HepG2 (cell line): ENCODE measurements at regions of chr2 and their contacts with region 1.

Region 1: DNA sequence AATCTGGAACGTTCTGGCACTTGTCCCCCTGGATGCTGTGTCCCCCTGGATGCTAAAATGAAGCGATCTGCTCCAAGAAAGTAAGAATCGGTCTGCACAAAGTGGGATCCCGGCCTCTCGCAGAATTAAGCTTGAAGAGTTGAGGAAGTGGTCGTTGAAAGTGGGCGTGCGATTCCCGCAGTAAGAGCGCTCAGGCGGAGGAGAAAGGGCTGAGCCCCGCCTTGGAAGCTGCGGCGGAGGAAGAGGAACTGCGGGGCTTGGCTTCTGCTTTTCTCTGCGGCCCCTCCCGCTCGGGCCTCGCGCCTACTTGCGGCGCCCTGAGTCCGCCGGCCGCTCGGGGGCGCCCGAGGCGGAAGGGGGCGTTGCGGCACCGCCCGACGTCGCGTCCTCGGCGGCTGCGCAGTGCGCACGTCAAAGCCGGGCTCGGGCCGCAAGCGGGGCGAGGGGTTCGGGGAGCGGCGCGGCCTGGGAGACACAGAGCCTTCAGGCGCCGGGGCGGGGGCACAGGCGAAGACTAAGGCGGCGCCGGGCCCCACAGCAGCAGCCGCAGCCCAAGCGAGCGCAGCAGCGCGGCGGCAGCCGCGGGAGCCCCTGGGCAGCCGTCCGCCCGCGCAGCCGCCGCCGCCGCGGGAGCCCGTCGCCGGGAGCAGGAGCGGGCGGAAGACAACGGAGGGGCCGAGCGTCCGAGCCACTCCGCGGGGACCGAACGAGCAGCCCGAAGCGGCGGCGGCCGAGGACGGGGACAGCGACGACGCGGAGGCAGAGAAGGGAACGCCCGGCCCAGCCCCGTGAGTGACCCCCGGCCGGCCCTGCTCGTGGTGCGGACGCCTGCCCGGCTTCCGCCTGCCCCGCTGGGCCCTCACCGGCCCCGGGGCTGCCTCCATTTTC is at the start of gene CAB39:
- DNase-seq: peak; percentile 79
- ATAC-seq: peak; percentile 85
- H3K4me3 ChIP-seq: peak within 1 kb of the TSS; percentile 79 to 98 (median 92)
- H3K27ac ChIP-seq: peak within 1 kb of the TSS; percentile 70
- H3K4me1 ChIP-seq: peaks cover 38% of the 10 kb centered on the region
- H3K27me3 ChIP-seq: no peaks in the 10 kb centered on the region; a peak in 2 of 5 replicates
- CTCF ChIP-seq: peak; percentile 92
- EP300 ChIP-seq: peak; percentile 22 to 58; a peak in 1 of 4 replicates
- POLR2A ChIP-seq: peak; percentile 10 to 78; a peak in 3 of 4 replicates
- RAD21 ChIP-seq: peak; percentile 82
- total RNA-seq, gene CAB39: 45.3 and 59.5 TPM in 2 replicates

Region 2: DNA sequence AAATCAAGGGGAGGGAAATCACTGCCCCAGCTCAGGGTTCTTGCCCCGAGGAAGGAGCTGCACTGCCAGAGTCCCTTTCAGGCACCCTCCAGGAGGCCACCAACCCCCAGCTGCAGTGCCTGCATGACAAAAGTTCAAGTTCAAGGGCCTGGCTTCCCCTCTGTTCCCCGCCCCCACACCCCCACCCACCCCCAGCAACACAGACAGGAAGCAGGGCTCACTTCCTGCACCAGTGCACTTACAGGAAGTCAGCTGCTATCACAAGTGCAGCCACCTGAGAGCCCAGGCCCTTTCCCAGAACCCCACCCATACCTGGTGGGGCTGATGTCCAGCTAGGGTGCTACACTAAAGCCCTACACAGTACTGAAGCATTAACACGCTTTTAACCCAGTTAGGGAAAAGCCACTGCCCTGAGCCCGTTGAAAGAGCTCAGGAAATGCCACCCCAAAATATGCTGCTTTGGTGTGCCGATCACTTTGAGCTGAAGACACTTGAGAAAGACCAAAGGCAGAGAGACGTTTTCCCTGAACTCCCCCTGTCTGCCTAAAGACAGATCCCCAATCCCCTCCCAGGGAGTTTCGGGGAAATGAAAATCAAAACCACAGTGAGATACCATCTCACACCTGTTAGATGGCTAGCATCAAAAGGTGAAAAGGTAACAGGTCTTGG is 110.0 kb before region 1 on chr2:
- CTCF ChIA-PET with region 1: no interaction called
- POLR2A ChIA-PET with region 1: no interaction called
- in situ Hi-C with region 1: no loop called
- intact Hi-C with region 1: no loop called
- DNase-seq: no peak
- ATAC-seq: peak; percentile 43
- H3K4me3 ChIP-seq: no peak overlapping the region
- H3K27ac ChIP-seq: no peak overlapping the region
- H3K4me1 ChIP-seq: no peaks in the 10 kb centered on the region
- H3K27me3 ChIP-seq: no peaks in the 10 kb centered on the region
- CTCF ChIP-seq: no peak
- EP300 ChIP-seq: no peak
- POLR2A ChIP-seq: no peak
- RAD21 ChIP-seq: no peak

Region 3: DNA sequence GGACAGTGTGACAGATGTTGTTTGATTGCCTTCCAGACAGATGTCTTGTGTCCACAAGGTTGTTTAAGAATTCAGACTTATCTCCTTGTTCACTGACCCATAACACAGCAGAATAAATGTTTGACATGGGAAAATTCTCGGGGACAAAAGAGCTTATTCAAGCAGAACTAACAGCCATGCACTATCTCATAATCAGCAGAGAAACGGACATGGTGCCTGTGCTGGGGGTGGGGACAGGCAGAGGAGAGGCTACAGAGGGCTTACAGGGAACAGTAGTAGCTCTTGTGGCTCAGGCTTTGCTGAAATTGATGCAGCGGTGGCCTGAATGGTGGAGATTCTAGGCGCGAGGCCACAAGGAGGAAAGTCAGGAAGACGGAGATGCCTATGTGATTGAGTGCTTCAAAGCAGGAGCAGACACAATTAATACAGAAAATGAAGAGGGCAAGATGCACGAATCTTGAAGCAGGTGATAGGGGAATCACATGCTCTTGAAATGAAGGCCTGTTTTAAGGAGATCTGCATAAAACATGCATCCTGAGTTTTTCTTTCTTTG is 62.0 kb before region 1 on chr2:
- CTCF ChIA-PET with region 1: no interaction called
- POLR2A ChIA-PET with region 1: no interaction called
- in situ Hi-C with region 1: no loop called
- intact Hi-C with region 1: no loop called
- DNase-seq: peak; percentile 72
- ATAC-seq: peak; percentile 87
- H3K4me3 ChIP-seq: no peak overlapping the region
- H3K27ac ChIP-seq: no peak overlapping the region
- H3K4me1 ChIP-seq: peaks cover 15% of the 10 kb centered on the region
- H3K27me3 ChIP-seq: peaks cover 0 to 21% of the 10 kb centered on the region in 2 experiments; a peak in 1 of 5 replicates
- CTCF ChIP-seq: no peak
- EP300 ChIP-seq: peak in 1 of 2 experiments; percentile 28; a peak in 1 of 4 replicates
- POLR2A ChIP-seq: no peak
- RAD21 ChIP-seq: no peak

Region 4: DNA sequence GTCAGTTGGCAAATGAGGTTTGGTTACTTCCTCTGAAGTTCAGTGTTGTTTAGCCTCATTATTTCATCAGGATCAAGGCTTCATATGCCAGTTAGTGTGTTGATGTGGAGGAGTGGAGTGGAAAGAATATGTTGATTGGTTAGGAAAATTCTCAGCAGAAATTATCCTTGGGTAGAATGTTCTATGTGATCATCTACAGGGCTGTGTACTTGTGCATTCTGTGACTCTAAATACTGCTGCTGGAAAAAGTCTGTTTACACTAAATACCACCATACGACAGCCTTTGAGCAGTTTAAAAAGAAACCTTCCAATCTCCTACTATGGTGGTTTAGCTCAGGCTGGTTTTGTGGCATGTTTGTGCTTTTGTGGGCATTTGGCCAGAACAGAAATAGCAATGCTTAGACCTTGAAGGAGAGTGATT is 25.7 kb after region 1 on chr2:
- CTCF ChIA-PET with region 1: no interaction called
- POLR2A ChIA-PET with region 1: interaction called, 7 read pairs
- in situ Hi-C with region 1: no loop called
- intact Hi-C with region 1: loop called (anchors 2 kb)
- DNase-seq: peak; percentile 35
- ATAC-seq: peak; percentile 83
- H3K4me3 ChIP-seq: peak overlapping the region in 2 of 3 experiments; percentile 32 to 37; a peak in 4 of 6 replicates
- H3K27ac ChIP-seq: peak overlapping the region; percentile 34
- H3K4me1 ChIP-seq: peaks cover 45% of the 10 kb centered on the region
- H3K27me3 ChIP-seq: no peaks in the 10 kb centered on the region
- CTCF ChIP-seq: no peak
- EP300 ChIP-seq: no peak; a peak in 1 of 4 replicates
- POLR2A ChIP-seq: no peak
- RAD21 ChIP-seq: no peak

Region 5: GRCh38 chr2:230762317-230762896 is 49.7 kb after region 1 on chr2:
- CTCF ChIA-PET with region 1: interaction called, 4 read pairs
- POLR2A ChIA-PET with region 1: interaction called, 6 read pairs
- in situ Hi-C with region 1: no loop called
- intact Hi-C with region 1: loop called (anchors 1 kb)
- DNase-seq: peak; percentile 65
- ATAC-seq: peak; percentile 100
- H3K4me3 ChIP-seq: no peak overlapping the region
- H3K27ac ChIP-seq: no peak overlapping the region
- H3K4me1 ChIP-seq: no peaks in the 10 kb centered on the region
- H3K27me3 ChIP-seq: no peaks in the 10 kb centered on the region
- CTCF ChIP-seq: peak; percentile 75
- EP300 ChIP-seq: no peak
- POLR2A ChIP-seq: no peak
- RAD21 ChIP-seq: no peak

Region 6: GRCh38 chr2:230798769-230799399 is 86.2 kb after region 1 on chr2:
- CTCF ChIA-PET with region 1: interaction called, 5 read pairs
- POLR2A ChIA-PET with region 1: interaction called, 3 read pairs
- in situ Hi-C with region 1: no loop called
- intact Hi-C with region 1: loop called (anchors 1 kb)
- DNase-seq: peak; percentile 63
- ATAC-seq: peak; percentile 81
- H3K4me3 ChIP-seq: no peak overlapping the region
- H3K27ac ChIP-seq: no peak overlapping the region
- H3K4me1 ChIP-seq: no peaks in the 10 kb centered on the region
- H3K27me3 ChIP-seq: no peaks in the 10 kb centered on the region
- CTCF ChIP-seq: peak; percentile 82
- EP300 ChIP-seq: no peak
- POLR2A ChIP-seq: no peak
- RAD21 ChIP-seq: peak; percentile 48; the same call in 1 of the 2 replicates